Panc1 (cell line): ENCODE measurements at regions of chr5 and their contacts with region 1.

Region 1: DNA sequence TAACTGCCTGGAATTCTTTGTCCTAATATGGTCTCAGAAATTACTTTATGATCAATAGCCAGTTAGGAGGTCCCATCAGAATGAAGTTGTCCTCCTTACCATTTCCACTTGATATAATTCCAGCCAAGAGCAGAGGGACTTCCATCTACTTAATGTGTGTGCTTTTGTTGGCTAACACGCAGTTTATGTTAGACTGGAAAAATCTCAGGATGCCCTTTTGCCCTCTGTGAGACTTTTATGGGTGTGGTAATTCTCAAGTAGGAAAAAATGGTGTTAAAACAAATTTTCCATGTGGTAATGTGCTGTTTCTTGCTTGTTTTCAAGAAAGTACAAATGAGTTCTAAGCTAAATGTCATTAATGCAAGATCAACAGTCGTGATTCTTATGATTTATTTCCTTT is 327.1 kb downstream of the MTRR start:
- DNase-seq: no peak
- ATAC-seq: no peak
- H3K4me3 ChIP-seq: no peak overlapping the region
- H3K27ac ChIP-seq: no peak overlapping the region
- H3K4me1 ChIP-seq: no peaks in the 10 kb centered on the region
- H3K27me3 ChIP-seq: no peaks in the 10 kb centered on the region
- CTCF ChIP-seq: no peak

Region 2: GRCh38 chr5:8213701-8214240 is 17.7 kb after region 1 on chr5:
- CTCF ChIA-PET with region 1: no interaction called
- POLR2A ChIA-PET with region 1: no interaction called
- in situ Hi-C with region 1: no loop called
- intact Hi-C with region 1: loop called (anchors 1 kb)
- DNase-seq: no peak
- ATAC-seq: no peak
- H3K4me3 ChIP-seq: no peak overlapping the region
- H3K27ac ChIP-seq: no peak overlapping the region
- H3K4me1 ChIP-seq: no peaks in the 10 kb centered on the region
- H3K27me3 ChIP-seq: no peaks in the 10 kb centered on the region
- CTCF ChIP-seq: no peak